ENCODE measurements at regions of chr2 and their contacts with region 1.

Region 1: GRCh38 chr2:239288951-239289511 is 111.8 kb downstream of the HDAC4 start:
- DNase-seq: peak; percentile 70
- H3K4me3 Mint-ChIP-seq: peak overlapping the region; percentile 44
- H3K27ac Mint-ChIP-seq: peak overlapping the region; percentile 82
- H3K4me1 Mint-ChIP-seq: peaks cover 80% of the 10 kb centered on the region
- H3K27me3 Mint-ChIP-seq: peaks cover 9% of the 10 kb centered on the region

Region 2: DNA sequence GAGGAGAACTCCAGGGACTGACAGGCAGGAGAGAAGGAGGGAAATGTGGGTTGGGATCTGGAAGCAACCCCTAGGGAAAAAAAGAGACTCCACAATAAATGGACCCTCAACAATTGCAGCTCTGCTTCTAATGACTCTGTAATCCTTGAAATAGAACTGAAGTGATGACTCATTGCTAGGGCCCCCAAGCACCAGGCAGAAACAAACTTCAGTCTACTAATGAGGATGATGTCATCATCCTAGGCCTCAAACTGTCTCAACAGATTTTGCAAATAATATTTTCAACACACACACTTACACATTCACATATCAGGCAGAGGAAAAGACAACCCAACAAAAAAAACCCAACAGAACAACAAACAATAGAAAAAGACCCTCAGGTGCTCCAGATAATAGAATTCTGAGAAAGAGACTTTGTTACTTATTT is 31.5 kb before region 1 on chr2:
- CTCF ChIA-PET with region 1: no interaction called
- POLR2A ChIA-PET with region 1: no interaction called
- intact Hi-C with region 1: loop called (anchors 2 kb)
- DNase-seq: peak; percentile 44
- H3K4me3 Mint-ChIP-seq: no peak overlapping the region
- H3K27ac Mint-ChIP-seq: peak overlapping the region; percentile 79
- H3K4me1 Mint-ChIP-seq: peaks cover 86% of the 10 kb centered on the region
- H3K27me3 Mint-ChIP-seq: no peaks in the 10 kb centered on the region

Region 3: GRCh38 chr2:239303711-239304532 is 14.9 kb after region 1 on chr2:
- CTCF ChIA-PET with region 1: interaction called, 6 read pairs
- POLR2A ChIA-PET with region 1: interaction called, 3 read pairs
- intact Hi-C with region 1: loop called (anchors 1 kb)
- DNase-seq: peak; percentile 44
- H3K4me3 Mint-ChIP-seq: no peak overlapping the region
- H3K27ac Mint-ChIP-seq: no peak overlapping the region
- H3K4me1 Mint-ChIP-seq: peaks cover 30% of the 10 kb centered on the region
- H3K27me3 Mint-ChIP-seq: peaks cover 1% of the 10 kb centered on the region

Region 4: GRCh38 chr2:239326831-239327535 is 38.0 kb after region 1 on chr2:
- CTCF ChIA-PET with region 1: interaction called, 4 read pairs
- POLR2A ChIA-PET with region 1: interaction called, 3 read pairs
- intact Hi-C with region 1: loop called (anchors 1 kb)
- DNase-seq: peak; percentile 90
- H3K4me3 Mint-ChIP-seq: peak overlapping the region; percentile 35
- H3K27ac Mint-ChIP-seq: peak overlapping the region; percentile 82
- H3K4me1 Mint-ChIP-seq: peaks cover 61% of the 10 kb centered on the region
- H3K27me3 Mint-ChIP-seq: no peaks in the 10 kb centered on the region

Region 5: DNA sequence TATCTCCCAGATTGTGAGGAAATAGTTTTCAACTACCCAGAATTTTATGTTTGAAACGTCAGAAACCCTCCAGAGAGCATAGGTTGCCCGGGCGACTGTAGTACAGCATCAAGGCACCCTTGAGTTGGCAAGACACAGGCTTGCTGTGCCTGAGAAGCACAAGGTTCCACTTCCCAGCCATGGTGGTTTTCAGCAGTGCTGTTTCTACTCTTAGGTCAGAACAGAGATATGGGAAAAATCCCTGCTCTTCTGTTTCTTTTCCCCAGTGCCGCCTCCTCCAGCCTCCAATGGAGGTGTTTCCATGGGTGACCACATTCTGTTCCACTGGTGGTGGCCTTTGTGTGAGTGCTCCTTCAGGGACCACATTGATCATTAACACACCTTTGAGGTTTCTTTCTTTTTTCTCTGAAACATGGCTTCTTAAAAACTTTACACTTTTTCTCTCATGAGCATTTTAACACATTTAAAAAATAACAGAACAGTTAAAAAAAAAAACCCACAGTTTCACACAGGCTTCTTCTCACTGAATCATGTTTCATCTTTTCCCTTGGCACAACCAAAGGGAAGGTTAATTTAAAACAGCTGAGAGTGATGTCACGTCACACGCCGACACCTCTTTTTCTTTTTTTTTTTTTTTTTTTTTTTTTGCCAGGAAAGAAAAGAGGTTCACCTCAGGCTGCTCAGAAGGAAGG is 341.0 kb after region 1 on chr2:
- CTCF ChIA-PET with region 1: no interaction called
- POLR2A ChIA-PET with region 1: no interaction called
- intact Hi-C with region 1: loop called (anchors 10 kb)
- DNase-seq: no peak
- H3K4me3 Mint-ChIP-seq: no peak overlapping the region
- H3K27ac Mint-ChIP-seq: no peak overlapping the region
- H3K4me1 Mint-ChIP-seq: peaks cover 30% of the 10 kb centered on the region
- H3K27me3 Mint-ChIP-seq: no peaks in the 10 kb centered on the region